ENCODE measurements at regions of chr17 and their contacts with region 1.

Region 1: GRCh38 chr17:7045909-7046724 is 2.2 kb upstream of the SLC16A11 start:
- DNase-seq: peak; percentile 96
- H3K4me3 ChIP-seq: peak overlapping the region; percentile 55
- H3K27ac ChIP-seq: peak overlapping the region; percentile 97
- H3K4me1 ChIP-seq: peaks cover 48% of the 10 kb centered on the region
- H3K27me3 ChIP-seq: no peaks in the 10 kb centered on the region
- CTCF ChIP-seq: peak; percentile 95

Region 2: DNA sequence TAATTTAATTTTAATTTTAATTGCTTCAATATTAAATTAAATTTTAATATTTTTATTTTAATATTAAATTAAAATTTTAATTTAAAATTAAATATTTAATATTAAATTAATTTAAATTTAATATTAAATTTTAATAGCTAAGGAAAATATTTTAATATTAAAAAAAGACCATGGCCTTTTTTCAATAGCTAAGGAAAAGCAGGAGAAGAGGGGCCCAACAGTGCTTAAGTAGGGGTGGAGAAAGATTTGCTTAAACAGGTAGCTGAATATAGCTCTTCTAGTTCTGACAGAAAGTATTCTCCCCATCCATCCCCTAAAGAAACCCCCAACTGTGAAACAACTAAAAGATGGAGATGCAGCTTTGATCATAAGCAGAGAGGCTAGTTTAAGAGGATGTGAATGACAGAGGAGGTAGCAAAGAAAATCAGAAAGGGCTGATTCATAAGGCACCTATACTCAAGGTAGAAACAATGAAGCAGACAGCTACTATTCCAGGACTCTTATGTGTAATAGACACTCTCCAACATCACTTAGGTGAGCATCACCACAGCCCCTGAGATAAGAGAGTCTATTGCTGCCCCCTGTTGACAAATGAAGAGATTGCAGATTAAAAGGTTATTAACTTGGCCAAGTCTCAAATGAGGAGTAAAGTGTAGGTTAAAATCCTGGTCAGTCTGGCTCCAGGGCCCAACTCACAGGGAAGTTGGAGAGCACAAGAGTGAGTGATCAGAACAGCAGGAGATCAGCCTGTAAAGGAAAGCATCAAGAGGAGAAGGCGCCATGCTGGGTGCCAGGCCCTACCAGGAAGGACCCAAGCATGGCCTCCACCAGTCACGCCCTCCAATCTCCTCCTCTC is 41.5 kb before region 1 on chr17:
- CTCF ChIA-PET with region 1: no interaction called
- POLR2A ChIA-PET with region 1: no interaction called
- intact Hi-C with region 1: no loop called
- DNase-seq: peak; percentile 49 to 73
- H3K4me3 ChIP-seq: no peak overlapping the region
- H3K27ac ChIP-seq: no peak overlapping the region
- H3K4me1 ChIP-seq: no peaks in the 10 kb centered on the region
- H3K27me3 ChIP-seq: no peaks in the 10 kb centered on the region
- CTCF ChIP-seq: peak; percentile 95

Region 3: GRCh38 chr17:7021993-7022778 is 23.9 kb before region 1 on chr17:
- CTCF ChIA-PET with region 1: no interaction called
- POLR2A ChIA-PET with region 1: interaction called, 18 read pairs
- intact Hi-C with region 1: no loop called
- DNase-seq: peak in 1 of 2 experiments; percentile 79
- H3K4me3 ChIP-seq: no peak overlapping the region; the same call in 1 of the 2 replicates
- H3K27ac ChIP-seq: no peak overlapping the region
- H3K4me1 ChIP-seq: 0 out of 2 replicates have a peak, but pooled peaks cover 4% of the 10 kb centered on the region
- H3K27me3 ChIP-seq: no peaks in the 10 kb centered on the region
- CTCF ChIP-seq: peak; percentile 94

Region 4: DNA sequence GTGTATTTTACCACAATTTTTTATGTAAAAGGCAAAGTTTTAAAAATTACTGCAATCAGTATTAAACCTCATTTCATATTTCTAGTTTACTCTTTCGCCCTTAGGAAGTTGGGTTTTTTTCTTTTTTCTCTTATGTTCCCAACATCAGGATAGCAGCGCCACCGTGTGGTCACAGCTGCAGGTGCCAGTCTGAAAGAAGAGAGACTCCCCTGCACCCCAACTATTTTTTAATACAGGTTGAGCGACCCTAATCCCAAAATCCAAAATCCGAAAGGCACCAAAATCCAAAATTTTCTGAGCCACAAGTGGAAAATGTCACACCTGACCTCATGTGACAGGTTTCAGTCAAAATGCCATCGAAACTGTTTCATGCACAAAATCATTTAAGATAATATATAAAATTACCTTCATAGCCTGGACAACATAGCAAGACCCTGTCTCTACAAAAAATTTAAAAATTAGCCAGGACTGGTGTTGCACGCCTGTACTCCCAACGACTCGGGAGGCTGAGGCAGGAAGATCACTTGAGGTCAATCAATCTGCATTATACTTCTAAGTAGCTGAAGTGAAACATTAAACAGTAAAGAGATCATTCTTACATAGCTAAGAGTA is 90.3 kb after region 1 on chr17:
- CTCF ChIA-PET with region 1: interaction called, 7 read pairs
- POLR2A ChIA-PET with region 1: interaction called, 3 read pairs
- intact Hi-C with region 1: loop called (anchors 1 kb)
- DNase-seq: peak; percentile 42 to 70
- H3K4me3 ChIP-seq: peak overlapping the region; percentile 50
- H3K27ac ChIP-seq: no peak overlapping the region
- H3K4me1 ChIP-seq: peaks cover 16% of the 10 kb centered on the region
- H3K27me3 ChIP-seq: no peaks in the 10 kb centered on the region
- CTCF ChIP-seq: peak; percentile 98

Region 5: DNA sequence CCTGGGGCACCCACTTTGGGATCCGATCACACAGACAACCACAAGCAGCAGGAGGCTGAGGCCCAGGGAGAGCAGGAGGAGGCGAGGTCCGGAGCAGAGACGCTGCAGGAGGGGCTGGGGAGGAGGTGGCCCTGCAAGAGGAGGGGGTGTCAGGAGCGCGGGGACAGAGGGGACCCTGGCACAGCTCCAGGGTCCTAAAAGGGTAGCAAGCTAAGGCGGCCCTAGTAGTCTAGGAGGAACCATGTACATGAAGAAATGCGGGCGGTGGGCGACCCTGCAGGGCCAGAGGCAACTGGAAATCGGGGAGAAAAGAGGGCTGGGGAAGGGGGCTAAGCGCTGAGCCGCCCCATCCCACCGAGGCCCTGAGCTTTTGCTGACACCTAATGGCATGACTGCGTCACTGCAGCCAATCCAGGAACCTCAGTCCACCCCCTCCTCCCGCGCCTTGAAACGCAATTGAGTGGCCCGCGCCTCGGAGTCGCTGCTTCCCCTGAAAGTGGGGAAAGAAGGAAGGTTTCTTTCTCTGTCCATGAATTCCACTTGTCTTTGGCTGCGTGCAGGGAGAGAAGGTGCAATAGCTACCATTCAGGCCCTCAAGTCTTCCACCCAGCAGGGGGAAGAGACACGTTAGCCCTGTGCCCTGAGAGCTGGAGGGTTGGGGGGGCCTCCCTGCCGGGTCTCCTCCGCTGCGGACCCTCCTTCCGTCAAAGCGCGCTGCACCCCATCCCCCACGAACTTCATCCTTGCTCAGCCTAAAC is 131.3 kb after region 1 on chr17:
- CTCF ChIA-PET with region 1: interaction called, 5 read pairs
- POLR2A ChIA-PET with region 1: no interaction called
- intact Hi-C with region 1: loop called (anchors 1 kb)
- DNase-seq: peak; percentile 39 to 75
- H3K4me3 ChIP-seq: peak overlapping the region; percentile 76
- H3K27ac ChIP-seq: no peak overlapping the region
- H3K4me1 ChIP-seq: peaks cover 4% of the 10 kb centered on the region
- H3K27me3 ChIP-seq: no peaks in the 10 kb centered on the region
- CTCF ChIP-seq: peak; percentile 92

Region 6: GRCh38 chr17:7296189-7296902 is 250.2 kb after region 1 on chr17:
- CTCF ChIA-PET with region 1: interaction called, 4 read pairs
- POLR2A ChIA-PET with region 1: no interaction called
- intact Hi-C with region 1: loop called (anchors 1 kb)
- DNase-seq: peak; percentile 61 to 90
- H3K4me3 ChIP-seq: peak overlapping the region; percentile 36
- H3K27ac ChIP-seq: no peak overlapping the region
- H3K4me1 ChIP-seq: peaks cover 25% of the 10 kb centered on the region
- H3K27me3 ChIP-seq: no peaks in the 10 kb centered on the region
- CTCF ChIP-seq: peak; percentile 95

Region 7: DNA sequence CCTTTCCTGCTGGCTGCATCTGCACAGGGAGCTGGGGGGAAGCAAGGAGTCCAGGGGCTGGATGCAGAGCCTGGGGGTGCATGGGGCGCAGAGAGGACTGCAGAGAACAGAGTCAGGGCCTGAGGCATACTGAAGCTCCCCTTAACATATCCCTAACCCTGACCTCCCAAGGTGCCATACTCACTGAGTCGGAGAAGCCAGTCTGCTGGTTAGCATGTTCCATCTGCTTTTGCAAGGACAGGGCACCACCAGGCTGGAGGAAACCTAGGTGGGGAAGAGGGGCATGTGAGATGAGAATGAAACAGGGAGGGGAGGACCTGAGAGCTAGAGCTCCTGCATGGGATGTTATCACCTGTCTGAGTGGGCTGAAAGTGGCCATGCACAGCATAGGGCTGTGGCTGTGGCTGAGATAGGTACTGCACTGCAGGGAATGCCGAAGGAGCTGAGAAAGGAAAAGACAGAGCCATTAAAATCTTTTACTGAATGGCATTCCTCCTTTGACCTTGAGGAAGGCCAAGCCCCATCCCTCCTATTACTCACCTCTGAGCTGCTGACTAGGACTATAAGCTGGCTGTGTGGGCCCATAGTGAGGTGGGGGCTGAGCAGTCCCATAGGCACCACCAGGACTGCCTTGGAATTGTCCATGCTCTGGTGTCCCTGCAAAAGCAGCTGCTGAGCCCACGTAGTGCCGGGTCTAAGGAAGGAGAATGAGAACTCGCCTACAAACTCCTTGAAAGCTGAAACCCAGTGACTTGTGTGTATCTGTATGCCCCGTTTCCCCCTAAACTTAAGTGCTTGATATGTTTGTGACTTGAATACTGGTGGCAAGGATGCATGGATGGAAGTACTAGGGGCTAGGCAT is 267.1 kb after region 1 on chr17:
- CTCF ChIA-PET with region 1: no interaction called
- POLR2A ChIA-PET with region 1: no interaction called
- intact Hi-C with region 1: no loop called
- DNase-seq: peak in 1 of 2 experiments; percentile 54
- H3K4me3 ChIP-seq: peak overlapping the region; percentile 97; the same call in 1 of the 2 replicates
- H3K27ac ChIP-seq: peak overlapping the region; percentile 64
- H3K4me1 ChIP-seq: peaks cover 49% of the 10 kb centered on the region
- H3K27me3 ChIP-seq: no peaks in the 10 kb centered on the region
- CTCF ChIP-seq: 0 out of 2 replicates have a peak, but pooled peaks have one; percentile 28

Region 8: GRCh38 chr17:7583253-7584109 is 537.4 kb after region 1 on chr17 and contains the start of gene MPDU1:
- CTCF ChIA-PET with region 1: no interaction called
- POLR2A ChIA-PET with region 1: no interaction called
- intact Hi-C with region 1: loop called (anchors 10 kb)
- DNase-seq: peak; percentile 72 to 97
- H3K4me3 ChIP-seq: peak within 1 kb of the TSS; percentile 65
- H3K27ac ChIP-seq: peak within 1 kb of the TSS; percentile 87
- H3K4me1 ChIP-seq: peaks cover 41% of the 10 kb centered on the region
- H3K27me3 ChIP-seq: no peaks in the 10 kb centered on the region
- CTCF ChIP-seq: no peak
- total RNA-seq, gene MPDU1: 33.4 and 44.2 TPM in 2 replicates